ENCODE measurements at regions of chr1 and their contacts with region 1.

Region 1: GRCh38 chr1:156129706-156130581 is 15.4 kb downstream of the LMNA start:
- DNase-seq: peak; percentile 63
- H3K4me3 Mint-ChIP-seq: no peak overlapping the region
- H3K27ac Mint-ChIP-seq: peak overlapping the region; percentile 33
- H3K4me1 Mint-ChIP-seq: peaks cover 47% of the 10 kb centered on the region
- H3K27me3 Mint-ChIP-seq: no peaks in the 10 kb centered on the region

Region 2: DNA sequence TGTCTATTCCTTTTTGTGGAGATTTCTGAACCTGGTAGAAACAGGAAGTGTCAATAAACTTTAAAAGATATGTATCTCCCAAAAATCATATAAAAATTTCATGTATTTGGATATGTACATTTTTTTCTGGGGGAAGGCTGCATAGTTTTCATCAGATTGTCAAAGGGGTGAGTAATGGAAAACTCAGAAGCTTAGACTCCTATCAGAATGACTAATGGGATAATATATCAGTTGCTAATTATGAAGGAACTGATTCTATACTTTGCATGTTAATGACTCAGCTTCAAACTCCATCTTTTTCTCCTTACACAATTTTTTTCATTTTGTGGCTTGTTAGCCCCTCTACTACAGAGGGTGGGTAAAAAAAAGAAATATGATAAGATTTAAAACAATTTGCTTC is 328.8 kb before region 1 on chr1:
- intact Hi-C with region 1: no loop called
- DNase-seq: no peak
- H3K4me3 Mint-ChIP-seq: no peak overlapping the region
- H3K27ac Mint-ChIP-seq: peak overlapping the region; percentile 42
- H3K4me1 Mint-ChIP-seq: peaks cover 4% of the 10 kb centered on the region
- H3K27me3 Mint-ChIP-seq: no peaks in the 10 kb centered on the region

Region 3: GRCh38 chr1:156090822-156091188 is 39.1 kb before region 1 on chr1:
- intact Hi-C with region 1: loop called (anchors 1 kb)
- DNase-seq: peak; percentile 76
- H3K4me3 Mint-ChIP-seq: no peak overlapping the region
- H3K27ac Mint-ChIP-seq: no peak overlapping the region
- H3K4me1 Mint-ChIP-seq: peaks cover 6% of the 10 kb centered on the region
- H3K27me3 Mint-ChIP-seq: peaks cover 20% of the 10 kb centered on the region

Region 4: GRCh38 chr1:156106624-156107488 is 23.1 kb before region 1 on chr1:
- intact Hi-C with region 1: loop called (anchors 1 kb)
- DNase-seq: no peak
- H3K4me3 Mint-ChIP-seq: peak overlapping the region; percentile 87
- H3K27ac Mint-ChIP-seq: peak overlapping the region; percentile 100
- H3K4me1 Mint-ChIP-seq: peaks cover 54% of the 10 kb centered on the region
- H3K27me3 Mint-ChIP-seq: no peaks in the 10 kb centered on the region

Region 5: DNA sequence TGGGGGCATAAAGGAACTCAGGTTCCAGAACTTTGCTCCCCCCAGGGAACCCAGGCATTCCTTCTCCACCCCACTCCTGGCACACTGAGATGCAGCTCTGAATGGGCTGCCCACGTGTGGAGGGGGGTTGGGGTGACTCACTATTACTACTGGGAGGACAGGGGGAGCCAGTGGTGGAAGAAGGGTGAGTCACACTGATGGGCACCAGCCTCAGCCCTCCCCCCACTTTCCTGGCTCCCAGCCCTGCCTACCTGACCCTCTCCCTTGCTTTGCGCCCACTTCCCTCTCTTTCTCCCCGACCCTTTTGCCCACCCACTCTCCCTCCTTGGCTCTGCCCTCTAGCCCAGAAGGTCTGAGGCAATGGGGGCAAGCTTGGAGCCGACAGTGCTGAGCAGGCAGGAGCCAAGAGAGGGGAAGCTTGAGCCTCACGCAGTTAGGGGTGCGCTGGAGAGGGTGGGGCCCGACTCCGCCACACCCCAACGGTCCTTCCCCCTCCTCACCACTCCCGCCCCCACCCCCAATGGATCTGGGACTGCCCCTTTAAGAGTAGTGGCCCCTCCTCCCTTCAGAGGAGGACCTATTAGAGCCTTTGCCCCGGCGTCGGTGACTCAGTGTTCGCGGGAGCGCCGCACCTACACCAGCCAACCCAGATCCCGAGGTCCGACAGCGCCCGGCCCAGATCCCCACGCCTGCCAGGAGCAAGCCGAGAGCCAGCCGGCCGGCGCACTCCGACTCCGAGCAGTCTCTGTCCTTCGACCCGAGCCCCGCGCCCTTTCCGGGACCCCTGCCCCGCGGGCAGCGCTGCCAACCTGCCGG is 15.6 kb before region 1 on chr1 and contains the start of gene LMNA:
- intact Hi-C with region 1: loop called (anchors 1 kb)
- DNase-seq: peak; percentile 70
- H3K4me3 Mint-ChIP-seq: peak within 1 kb of the TSS; percentile 95
- H3K27ac Mint-ChIP-seq: peak within 1 kb of the TSS; percentile 80
- H3K4me1 Mint-ChIP-seq: peaks cover 35% of the 10 kb centered on the region
- H3K27me3 Mint-ChIP-seq: peaks cover 1% of the 10 kb centered on the region
- total RNA-seq, gene LMNA: 246 and 247 TPM in 2 replicates

Measured in activated T-helper 2 cell treated with anti-CD3 and anti-CD28 coated beads, Interferon-gamma antibody, Interleukin-2, Interleukin-4, amounts not matched to agents 10 μg/mL and 5 μg/mL and 100 μg/mL, durations not matched to agents 14 hours and 24 hours and 36 hours (primary cell).